Heart right ventricle (tissue), 16 donors: ENCODE measurements at regions of chr6 and their contacts with region 1.

Region 1: DNA sequence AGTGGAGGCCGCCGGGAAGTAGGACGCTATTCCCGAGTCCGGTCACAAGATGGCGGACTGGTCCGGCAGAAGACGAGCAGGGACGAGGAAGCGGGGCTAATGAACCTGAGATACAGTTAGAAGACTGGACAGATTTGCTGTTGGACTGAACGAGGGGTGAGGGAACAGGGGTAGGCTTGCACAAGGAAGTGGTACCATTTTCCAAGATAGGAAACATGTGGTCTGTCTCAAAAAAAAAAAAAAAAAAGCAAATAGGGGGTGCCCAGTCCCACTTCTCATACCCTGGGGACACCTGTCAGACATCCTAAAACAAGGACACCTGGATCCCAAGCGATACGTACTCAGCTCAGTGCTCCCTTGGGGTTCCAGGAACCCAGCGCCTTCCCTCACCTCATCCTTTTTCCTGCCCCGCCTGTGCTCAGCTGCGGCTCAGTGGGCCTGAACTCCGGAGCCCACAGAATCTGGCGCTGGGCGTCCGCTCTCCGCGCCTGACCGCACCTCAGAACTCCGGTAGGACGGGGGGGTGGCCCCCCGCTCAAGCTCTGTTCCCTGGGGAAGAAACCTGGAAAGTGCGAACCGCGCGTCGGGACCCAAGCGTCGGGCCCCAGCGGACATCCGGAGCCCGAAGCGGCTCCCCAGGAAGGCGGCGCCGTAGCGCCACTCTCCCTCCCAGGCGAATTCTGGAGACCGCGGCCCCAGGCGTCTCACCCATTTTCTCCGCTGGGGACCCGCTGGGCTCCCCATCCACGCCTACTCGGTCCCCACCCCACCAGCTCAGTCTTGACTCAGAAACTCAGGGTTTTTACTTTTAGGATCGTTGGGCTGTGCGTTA is at the start of gene LY6G5C:
- DNase-seq: peak; percentile 79 to 86
- ATAC-seq: peak; percentile 84 to 94 (median 92)
- H3K4me3 ChIP-seq: peak within 1 kb of the TSS; percentile 42 to 68 (median 58)
- H3K27ac ChIP-seq: peak within 1 kb of the TSS in 9 of 10 donors; percentile 34 to 84 (median 66)
- H3K4me1 ChIP-seq: peaks cover 5 to 27% (median 22%) of the 10 kb centered on the region in 9 donors
- H3K27me3 ChIP-seq: no peaks in the 10 kb centered on the region
- CTCF ChIP-seq: peak; percentile 46 to 87 (median 78)
- total RNA-seq, gene LY6G5C: 1.2 to 3.5 (median 1.9) TPM

Region 2: GRCh38 chr6:31729515-31729978 is 48.5 kb after region 1 on chr6:
- intact Hi-C with region 1: loop called in 1 of 10 experiments (anchors 5 kb)
- DNase-seq: peak; percentile 92 to 94
- ATAC-seq: peak; percentile 84 to 92 (median 90)
- H3K4me3 ChIP-seq: peak overlapping the region; percentile 66 to 95 (median 78)
- H3K27ac ChIP-seq: peak overlapping the region; percentile 93 to 97 (median 94)
- H3K4me1 ChIP-seq: peaks cover 12 to 82% (median 52%) of the 10 kb centered on the region in 9 donors
- H3K27me3 ChIP-seq: no peaks in the 10 kb centered on the region
- CTCF ChIP-seq: peak in 6 of 9 donors; percentile 46 to 82 (median 67)

Region 3: GRCh38 chr6:31752739-31753319 is 71.8 kb after region 1 on chr6:
- intact Hi-C with region 1: no loop called
- DNase-seq: no peak
- ATAC-seq: no peak
- H3K4me3 ChIP-seq: no peak overlapping the region
- H3K27ac ChIP-seq: no peak overlapping the region
- H3K4me1 ChIP-seq: no peaks in the 10 kb centered on the region
- H3K27me3 ChIP-seq: no peaks in the 10 kb centered on the region
- CTCF ChIP-seq: no peak

Region 4: DNA sequence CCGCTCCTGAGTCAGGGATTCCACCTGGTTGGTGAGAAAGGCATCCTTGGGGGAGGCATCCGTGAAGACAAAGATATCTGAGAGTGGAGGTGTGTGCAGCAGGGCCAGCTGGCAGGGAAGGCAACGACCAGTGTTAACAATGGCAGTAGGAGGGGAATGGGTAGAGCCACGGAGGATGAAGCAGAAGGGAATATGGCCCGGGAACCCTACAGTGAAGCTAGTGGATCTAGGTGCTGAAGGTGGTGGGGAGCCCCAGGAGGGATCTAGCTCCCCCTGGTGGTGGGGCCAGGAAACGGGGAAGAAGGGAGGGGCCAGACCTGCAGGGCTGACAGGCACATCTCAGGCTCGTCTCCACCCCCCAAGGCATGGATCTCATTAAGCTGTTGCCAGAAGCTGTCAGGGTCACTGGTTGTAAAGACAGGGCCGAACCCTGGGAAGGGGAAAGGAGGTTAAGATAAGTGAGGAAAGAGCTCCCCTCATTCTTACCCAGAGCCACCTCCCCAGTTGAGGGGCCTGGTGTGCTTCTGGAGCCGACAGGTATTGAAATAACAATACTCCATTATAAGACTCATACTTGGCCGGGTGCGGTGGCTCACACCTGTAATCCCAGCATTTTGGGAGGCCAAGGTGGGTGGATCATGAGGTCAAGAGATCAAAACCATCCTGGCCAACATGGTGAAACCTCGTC is 88.8 kb after region 1 on chr6:
- intact Hi-C with region 1: loop called in 3 of 10 experiments (anchors 2 to 10 kb)
- DNase-seq: peak; percentile 62 to 76
- ATAC-seq: peak in 7 of 8 donors; percentile 49 to 73 (median 65)
- H3K4me3 ChIP-seq: no peak overlapping the region
- H3K27ac ChIP-seq: peak overlapping the region in 1 of 10 donors; percentile 75
- H3K4me1 ChIP-seq: peaks cover 0 to 30% (median 0%) of the 10 kb centered on the region in 9 donors
- H3K27me3 ChIP-seq: no peaks in the 10 kb centered on the region
- CTCF ChIP-seq: peak; percentile 46 to 90 (median 71)

Region 5: DNA sequence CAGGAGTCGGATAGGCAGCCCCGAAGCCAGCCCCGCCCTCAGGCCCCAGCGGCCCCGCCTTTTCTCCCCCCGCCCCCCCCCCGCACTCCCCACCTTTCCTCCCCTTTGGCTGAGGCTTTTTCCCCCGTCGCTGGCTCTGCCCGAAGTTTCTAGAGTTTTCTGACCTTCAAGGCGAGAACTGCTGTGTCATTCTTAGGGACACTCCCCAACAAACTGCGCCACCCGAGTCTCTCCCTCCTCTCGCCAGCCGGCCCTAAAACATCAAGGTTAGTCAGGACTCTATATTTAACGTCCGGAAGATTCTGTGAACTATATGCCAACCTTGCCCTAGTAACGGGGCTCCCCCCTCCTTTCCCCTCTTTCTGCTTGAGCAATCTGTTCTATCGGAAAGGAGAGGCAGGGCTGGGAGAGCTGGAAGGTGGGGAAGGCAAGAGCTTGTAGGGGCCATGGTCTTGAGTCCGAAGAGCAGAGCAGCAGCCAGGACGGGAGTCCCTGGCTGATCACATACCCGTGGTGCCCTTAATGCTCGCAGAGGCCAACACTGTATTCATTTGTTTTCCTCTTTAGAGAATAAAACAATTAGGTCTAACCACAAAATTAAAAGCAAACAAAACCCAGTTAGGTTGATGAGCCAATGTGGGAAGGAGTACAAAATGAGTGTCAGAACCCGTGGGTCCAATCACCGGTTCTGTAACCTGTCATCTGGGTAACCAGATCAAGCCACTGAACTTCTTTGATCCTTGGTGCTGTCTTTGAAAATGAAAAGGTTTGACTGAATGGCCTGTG is 141.2 kb after region 1 on chr6:
- intact Hi-C with region 1: no loop called
- DNase-seq: peak; percentile 78 to 88
- ATAC-seq: peak; percentile 57 to 78 (median 72)
- H3K4me3 ChIP-seq: peak overlapping the region; percentile 36 to 73 (median 56)
- H3K27ac ChIP-seq: peak overlapping the region; percentile 93 to 99 (median 98)
- H3K4me1 ChIP-seq: peaks cover 16 to 80% (median 62%) of the 10 kb centered on the region in 9 donors
- H3K27me3 ChIP-seq: no peaks in the 10 kb centered on the region
- CTCF ChIP-seq: no peak

Region 6: DNA sequence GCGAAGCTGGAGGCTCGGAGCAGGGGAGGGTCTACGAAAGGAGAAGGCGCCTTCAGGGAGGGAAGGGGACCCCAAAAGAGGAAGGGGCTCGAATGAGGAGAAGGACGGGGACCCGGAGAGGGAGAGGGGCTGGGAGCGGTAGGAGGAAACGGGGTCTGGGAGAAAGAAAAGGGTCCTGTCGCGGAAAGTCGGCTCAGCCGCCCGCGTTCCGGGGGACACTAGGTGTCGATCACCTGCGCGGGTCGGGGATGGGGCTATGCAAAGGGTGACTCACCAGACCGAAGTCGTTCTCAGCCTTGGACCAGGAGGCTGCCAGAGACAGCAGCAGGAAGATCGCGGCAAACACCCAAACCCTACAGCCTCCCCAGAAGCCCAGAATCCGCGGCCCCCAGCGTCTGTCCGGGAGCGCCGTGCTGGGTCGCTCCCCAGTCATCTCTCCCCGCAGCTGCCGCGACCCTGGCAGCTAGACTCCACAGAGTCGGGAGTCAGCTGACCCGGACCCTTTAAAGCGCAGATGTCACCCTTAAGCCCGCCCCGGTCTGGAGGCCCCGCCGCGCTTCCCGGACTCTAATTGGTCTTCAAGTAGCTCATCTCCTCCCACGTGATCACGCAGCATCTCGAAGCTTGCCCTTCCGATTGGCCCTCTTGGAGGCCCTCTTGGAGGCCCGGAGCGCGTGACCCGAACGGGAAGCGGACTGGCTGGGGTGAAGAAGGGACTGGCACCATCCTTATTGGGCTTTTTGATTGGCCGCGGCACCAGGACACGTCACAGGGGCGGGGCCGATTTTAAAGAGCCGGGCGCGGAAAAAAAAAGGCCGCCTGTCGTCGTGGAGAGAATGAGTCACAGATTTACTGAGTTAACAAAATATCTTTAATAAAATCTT is 181.5 kb after region 1 on chr6 and contains the start of gene NEU1:
- intact Hi-C with region 1: loop called in 1 of 10 experiments (anchors 10 kb)
- DNase-seq: peak; percentile 99 to 100
- ATAC-seq: peak; percentile 97 to 99 (median 98)
- H3K4me3 ChIP-seq: peak within 1 kb of the TSS; percentile 65 to 93 (median 78)
- H3K27ac ChIP-seq: peak within 1 kb of the TSS; percentile 8 to 93 (median 84)
- H3K4me1 ChIP-seq: peaks cover 8 to 29% (median 21%) of the 10 kb centered on the region in 9 donors
- H3K27me3 ChIP-seq: no peaks in the 10 kb centered on the region
- CTCF ChIP-seq: no peak
- total RNA-seq, gene NEU1: 18.1 to 32.4 (median 22.3) TPM

Region 7: DNA sequence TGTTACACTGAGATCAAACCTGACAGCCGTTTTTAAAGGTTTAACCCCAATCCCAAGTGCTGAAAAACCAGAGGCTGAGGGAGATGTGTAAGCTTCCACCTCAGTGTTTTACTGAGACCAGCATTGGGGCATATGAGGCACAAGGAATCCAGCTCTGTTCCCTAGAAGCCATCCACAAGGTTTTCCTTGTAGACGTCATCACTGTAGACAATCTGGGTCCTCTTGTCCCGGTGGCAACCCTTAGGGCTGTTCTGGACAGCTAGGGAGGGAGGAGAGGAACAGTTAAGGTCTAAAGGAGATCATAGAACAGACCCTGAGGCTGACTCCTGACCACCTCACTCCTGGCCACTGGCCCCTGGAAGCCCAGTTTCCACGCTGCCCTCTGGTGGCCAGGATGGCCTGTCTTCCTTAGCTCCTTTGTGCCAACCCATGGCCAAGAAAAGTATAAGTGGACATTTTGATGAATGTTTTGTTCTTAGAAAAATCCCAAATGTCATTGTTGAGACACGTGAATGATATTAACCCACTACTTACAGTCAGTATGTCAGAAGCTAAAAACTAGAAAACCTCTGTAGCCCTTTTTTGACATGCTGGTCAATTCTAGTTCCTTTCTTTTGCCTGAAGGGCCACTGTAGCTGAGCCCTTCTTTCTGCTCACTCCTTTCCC is 271.2 kb after region 1 on chr6:
- intact Hi-C with region 1: loop called in 8 of 10 experiments (anchors 5 to 10 kb)
- DNase-seq: peak in 1 of 2 donors; percentile 62
- ATAC-seq: peak in 7 of 8 donors; percentile 23 to 72 (median 68)
- H3K4me3 ChIP-seq: no peak overlapping the region
- H3K27ac ChIP-seq: peak overlapping the region in 1 of 10 donors; percentile 11
- H3K4me1 ChIP-seq: peaks cover 0 to 2% (median 0%) of the 10 kb centered on the region in 9 donors
- H3K27me3 ChIP-seq: no peaks in the 10 kb centered on the region
- CTCF ChIP-seq: peak; percentile 46 to 86 (median 70)